PC-9 (cell line): ENCODE measurements at regions of chr14 and their contacts with region 1.

Region 1: DNA sequence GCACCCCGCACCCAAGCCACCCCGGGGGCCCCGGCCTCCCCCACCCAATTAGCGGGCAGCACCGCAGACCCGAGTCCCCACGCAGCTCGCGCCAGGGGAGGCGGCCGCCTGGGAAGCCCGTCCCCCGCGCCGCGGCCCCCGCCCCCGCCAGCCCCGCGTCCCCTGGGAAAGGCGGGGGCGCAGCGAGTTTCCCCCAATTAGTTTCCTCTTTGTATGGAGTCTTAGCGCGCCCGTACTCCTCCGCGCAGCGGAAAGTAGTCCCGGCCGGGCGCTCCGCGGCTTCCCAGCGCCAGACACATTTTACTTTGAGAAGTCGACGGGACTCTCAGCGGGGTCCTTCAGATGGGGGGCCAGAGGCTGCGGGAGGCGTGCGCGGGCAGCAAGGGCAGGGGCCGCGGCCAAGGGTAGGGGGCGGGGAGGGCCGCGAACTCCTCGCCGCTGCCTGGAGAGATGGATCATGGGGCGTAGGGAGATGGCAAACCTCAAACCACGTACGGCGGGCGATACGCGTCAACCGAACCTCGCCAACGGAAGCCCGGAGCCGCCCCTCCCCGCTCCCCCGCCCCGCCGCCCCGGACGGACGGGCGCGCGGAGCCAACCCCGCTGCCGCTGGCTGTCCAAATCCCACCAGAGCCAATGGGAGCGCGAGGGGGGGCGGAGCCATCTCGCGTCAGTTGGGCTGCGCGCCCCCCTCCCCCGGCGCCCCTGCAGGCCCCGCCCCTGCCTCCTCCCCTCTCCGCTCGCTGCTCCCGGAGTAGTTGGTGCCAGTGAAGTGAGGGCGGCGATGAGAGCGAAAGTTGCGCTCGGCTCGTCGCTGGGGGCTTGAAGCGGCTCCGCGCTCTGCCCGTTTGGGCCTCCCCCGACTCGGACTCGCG is at the start of gene RCOR1:
- DNase-seq: peak; percentile 93 to 100
- H3K4me3 ChIP-seq: peak within 1 kb of the TSS; percentile 90
- H3K27ac ChIP-seq: peak within 1 kb of the TSS; percentile 96
- H3K4me1 ChIP-seq: peaks cover 35% of the 10 kb centered on the region
- H3K27me3 ChIP-seq: no peaks in the 10 kb centered on the region
- CTCF ChIP-seq: no peak
- total RNA-seq, gene RCOR1: 54.2 and 67.2 TPM in 2 replicates

Region 2: GRCh38 chr14:102279688-102280348 is 312.3 kb before region 1 on chr14:
- CTCF ChIA-PET with region 1: no interaction called
- POLR2A ChIA-PET with region 1: interaction called, 10 read pairs
- intact Hi-C with region 1: no loop called
- DNase-seq: peak; percentile 94 to 100
- H3K4me3 ChIP-seq: peak overlapping the region; percentile 26; the same call in 1 of the 2 replicates
- H3K27ac ChIP-seq: peak overlapping the region; percentile 95
- H3K4me1 ChIP-seq: peaks cover 82% of the 10 kb centered on the region
- H3K27me3 ChIP-seq: no peaks in the 10 kb centered on the region
- CTCF ChIP-seq: no peak

Region 3: GRCh38 chr14:102500158-102500662 is 91.9 kb before region 1 on chr14:
- CTCF ChIA-PET with region 1: no interaction called
- POLR2A ChIA-PET with region 1: no interaction called
- intact Hi-C with region 1: no loop called
- DNase-seq: no peak
- H3K4me3 ChIP-seq: no peak overlapping the region
- H3K27ac ChIP-seq: no peak overlapping the region
- H3K4me1 ChIP-seq: no peaks in the 10 kb centered on the region
- H3K27me3 ChIP-seq: no peaks in the 10 kb centered on the region
- CTCF ChIP-seq: no peak

Region 4: DNA sequence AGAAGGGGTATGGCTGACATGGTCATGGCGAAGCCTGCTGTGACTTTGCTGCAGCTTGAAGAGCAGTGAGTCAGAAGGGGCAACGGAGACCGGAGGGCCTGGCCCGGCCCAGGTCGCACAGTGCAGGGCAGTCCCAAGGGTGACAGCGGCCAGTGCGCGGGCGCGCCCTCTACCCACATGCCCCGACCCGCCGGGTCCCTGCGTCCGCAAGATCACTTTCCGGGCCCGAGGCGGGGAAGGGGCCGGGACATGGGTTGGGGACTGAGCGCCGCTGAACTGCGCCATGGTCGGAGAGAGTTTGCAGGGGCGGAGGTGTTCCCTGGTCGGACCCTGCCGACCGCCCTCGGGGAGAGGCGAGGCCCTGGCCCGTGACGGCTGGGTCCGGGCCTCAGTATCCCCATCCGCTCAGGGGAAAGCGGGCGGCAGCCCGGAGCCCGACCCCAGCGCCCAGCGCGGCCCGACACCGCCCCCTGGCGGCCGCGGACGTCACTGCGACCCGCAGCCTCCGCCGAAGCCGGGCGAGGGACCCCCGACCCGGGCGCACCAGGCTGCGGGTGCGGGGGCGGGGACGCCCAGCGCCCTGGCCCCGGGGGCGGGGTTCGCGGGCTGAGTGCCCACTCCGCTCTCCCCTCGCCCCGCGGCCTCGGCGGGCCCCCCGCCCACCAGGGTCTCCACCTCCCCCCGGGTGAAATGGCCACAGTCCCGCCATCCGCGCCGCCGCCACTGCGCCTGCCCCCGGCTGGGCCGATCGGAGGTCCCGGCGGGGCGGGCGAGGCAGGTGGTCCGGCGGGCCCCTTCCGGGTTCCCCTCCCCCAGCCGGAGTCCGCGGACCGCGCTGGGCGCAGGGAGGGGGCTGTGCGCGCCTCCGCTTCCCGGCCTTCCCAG is 75.4 kb before region 1 on chr14:
- CTCF ChIA-PET with region 1: interaction called, 13 read pairs
- POLR2A ChIA-PET with region 1: no interaction called
- intact Hi-C with region 1: no loop called
- DNase-seq: peak; percentile 55 to 72
- H3K4me3 ChIP-seq: peak overlapping the region; percentile 73
- H3K27ac ChIP-seq: no peak overlapping the region
- H3K4me1 ChIP-seq: peaks cover 7% of the 10 kb centered on the region
- H3K27me3 ChIP-seq: no peaks in the 10 kb centered on the region
- CTCF ChIP-seq: peak; percentile 89

Region 5: GRCh38 chr14:102539580-102540314 is 52.4 kb before region 1 on chr14:
- CTCF ChIA-PET with region 1: no interaction called
- POLR2A ChIA-PET with region 1: no interaction called
- intact Hi-C with region 1: no loop called
- DNase-seq: no peak
- H3K4me3 ChIP-seq: no peak overlapping the region
- H3K27ac ChIP-seq: no peak overlapping the region
- H3K4me1 ChIP-seq: peaks cover 15% of the 10 kb centered on the region
- H3K27me3 ChIP-seq: peaks cover 5% of the 10 kb centered on the region; the same call in 1 of the 2 replicates
- CTCF ChIP-seq: no peak

Region 6: DNA sequence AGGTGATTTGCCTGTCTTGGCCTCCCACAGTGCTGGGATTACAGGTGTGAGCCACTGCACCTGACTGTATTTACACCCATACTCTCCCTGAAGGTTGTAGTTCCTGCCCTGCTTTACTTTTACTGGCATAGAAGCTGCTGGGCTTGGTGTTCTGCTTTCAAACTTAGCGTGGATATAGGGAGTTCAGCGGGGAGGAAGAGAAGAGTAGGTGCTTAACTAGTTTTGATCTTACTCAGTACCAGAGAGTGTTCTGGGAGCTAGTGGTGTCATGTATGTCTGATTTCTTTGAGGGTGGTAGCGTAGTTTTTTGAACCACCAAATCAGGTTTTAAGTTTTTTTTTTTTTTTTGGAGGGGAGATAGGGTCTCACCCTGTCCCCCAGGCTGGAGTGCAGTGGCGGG is 14.2 kb after region 1 on chr14:
- CTCF ChIA-PET with region 1: interaction called, 6 read pairs
- POLR2A ChIA-PET with region 1: interaction called, 21 read pairs
- intact Hi-C with region 1: no loop called
- DNase-seq: no peak
- H3K4me3 ChIP-seq: no peak overlapping the region
- H3K27ac ChIP-seq: no peak overlapping the region
- H3K4me1 ChIP-seq: peaks cover 29% of the 10 kb centered on the region
- H3K27me3 ChIP-seq: no peaks in the 10 kb centered on the region
- CTCF ChIP-seq: no peak

Region 7: DNA sequence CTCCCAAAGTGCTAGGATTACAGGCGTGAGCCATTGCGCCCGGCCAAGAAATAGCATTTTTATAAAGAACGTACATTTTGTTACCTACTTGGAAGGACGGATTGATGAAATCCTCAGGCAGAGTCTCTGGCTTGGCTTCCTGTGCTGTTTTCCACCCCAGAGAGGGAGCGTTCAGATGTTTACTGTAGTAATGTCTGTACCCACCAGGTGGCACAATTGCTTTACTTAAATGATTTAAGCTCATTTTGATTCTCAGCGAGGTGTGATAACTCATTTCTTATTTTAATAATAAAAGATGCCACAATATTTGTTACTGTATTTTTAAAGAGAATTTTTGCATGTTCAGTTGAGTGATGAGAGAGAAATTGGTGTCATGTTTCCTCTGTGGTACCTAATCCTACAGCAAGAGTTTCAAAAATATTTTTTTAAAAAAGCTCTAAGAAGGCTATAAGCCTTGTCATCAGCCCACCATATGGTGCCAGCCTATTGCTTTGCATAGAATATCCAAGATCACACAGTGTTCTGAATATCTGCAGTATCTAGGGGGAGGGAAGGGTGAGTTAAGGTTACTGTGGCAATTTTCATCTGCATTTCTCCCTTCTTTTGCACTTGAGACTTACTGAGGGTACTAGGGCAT is 102.5 kb after region 1 on chr14:
- CTCF ChIA-PET with region 1: interaction called, 10 read pairs
- POLR2A ChIA-PET with region 1: no interaction called
- intact Hi-C with region 1: loop called (anchors 1 kb)
- DNase-seq: peak; percentile 66 to 80
- H3K4me3 ChIP-seq: no peak overlapping the region
- H3K27ac ChIP-seq: no peak overlapping the region
- H3K4me1 ChIP-seq: peaks cover 26% of the 10 kb centered on the region
- H3K27me3 ChIP-seq: no peaks in the 10 kb centered on the region
- CTCF ChIP-seq: peak; percentile 99

Region 8: DNA sequence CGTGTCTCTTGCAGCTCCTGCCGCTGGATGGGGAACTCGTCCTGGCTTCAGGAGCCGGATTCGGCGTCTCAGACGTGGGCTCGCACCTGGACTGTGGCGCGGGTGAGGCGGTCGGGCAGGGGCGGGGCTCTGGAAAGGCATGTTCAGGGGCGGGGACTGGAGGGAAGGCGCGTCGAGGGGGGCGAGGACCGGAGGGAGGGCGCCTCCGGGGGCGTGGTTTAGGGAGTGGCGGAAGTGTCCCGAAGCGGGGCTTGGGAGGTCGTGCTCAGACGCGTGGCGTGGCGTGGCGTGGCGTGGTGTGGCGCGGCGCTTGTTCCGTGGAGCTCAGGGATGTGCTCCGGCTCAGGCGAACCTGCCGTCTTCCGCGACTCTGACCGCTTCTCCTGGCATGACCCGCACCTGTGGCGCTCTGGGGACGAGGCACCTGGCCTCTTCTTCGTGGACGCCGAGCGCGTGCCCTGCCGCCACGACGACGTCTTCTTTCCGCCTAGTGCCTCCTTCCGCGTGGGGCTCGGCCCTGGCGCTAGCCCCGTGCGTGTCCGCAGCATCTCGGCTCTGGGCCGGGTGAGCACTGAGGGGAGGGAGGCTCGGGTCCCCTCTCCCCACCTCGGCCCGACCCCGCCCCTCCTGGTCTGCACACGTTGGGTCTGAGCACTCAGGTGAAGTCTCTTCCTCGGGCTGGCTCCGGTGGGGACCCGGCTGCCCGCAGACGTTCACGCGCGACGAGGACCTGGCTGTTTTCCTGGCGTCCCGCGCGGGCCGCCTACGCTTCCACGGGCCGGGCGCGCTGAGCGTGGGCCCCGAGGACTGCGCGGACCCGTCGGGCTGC is 336.5 kb after region 1 on chr14:
- CTCF ChIA-PET with region 1: no interaction called
- POLR2A ChIA-PET with region 1: no interaction called
- intact Hi-C with region 1: loop called (anchors 5 kb)
- DNase-seq: peak; percentile 83 to 97
- H3K4me3 ChIP-seq: peak overlapping the region; percentile 87
- H3K27ac ChIP-seq: peak overlapping the region; percentile 74
- H3K4me1 ChIP-seq: peaks cover 20% of the 10 kb centered on the region
- H3K27me3 ChIP-seq: no peaks in the 10 kb centered on the region
- CTCF ChIP-seq: no peak

Region 9: GRCh38 chr14:103121846-103122584 is 529.9 kb after region 1 on chr14:
- CTCF ChIA-PET with region 1: no interaction called
- POLR2A ChIA-PET with region 1: no interaction called
- intact Hi-C with region 1: loop called (anchors 5 kb)
- DNase-seq: peak; percentile 100
- H3K4me3 ChIP-seq: peak overlapping the region; percentile 81
- H3K27ac ChIP-seq: peak overlapping the region; percentile 86
- H3K4me1 ChIP-seq: peaks cover 55% of the 10 kb centered on the region
- H3K27me3 ChIP-seq: no peaks in the 10 kb centered on the region
- CTCF ChIP-seq: no peak